ENCODE measurements at regions of chr4 and their contacts with region 1.

Region 1: GRCh38 chr4:123785538-123785937 is 388.9 kb downstream of the SPRY1 start:
- DNase-seq: peak; percentile 89

Region 2: DNA sequence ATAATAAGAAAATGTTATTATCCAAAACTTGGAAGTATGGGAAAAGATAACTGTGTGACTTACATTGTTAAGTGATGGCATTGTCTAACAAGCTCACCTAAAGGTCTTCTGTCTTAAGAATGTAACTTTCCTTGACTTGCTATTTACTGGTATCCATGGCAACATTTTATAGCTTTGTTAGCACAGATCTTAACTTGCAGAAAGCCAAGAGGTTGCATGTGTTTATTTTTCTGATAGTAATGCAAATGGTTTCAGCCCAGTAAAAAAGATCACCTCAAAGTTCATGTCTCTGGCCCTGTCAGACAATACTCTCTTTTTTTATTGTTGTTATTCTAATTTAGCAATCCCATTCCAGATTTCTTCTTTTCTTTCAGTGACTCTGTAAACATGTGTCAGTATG is 36.3 kb after region 1 on chr4:
- intact Hi-C with region 1: no loop called
- DNase-seq: no peak

Region 3: GRCh38 chr4:123832173-123833026 is 46.9 kb after region 1 on chr4:
- intact Hi-C with region 1: loop called in 1 of 2 experiments (anchors 10 kb)
- DNase-seq: peak; percentile 81

Measured in posterior vena cava (tissue), 2 donors.